Activated CD8-positive, alpha-beta T cell treated with anti-CD3 and anti-CD28 coated beads for 36 hours (primary cell): ENCODE measurements at regions of chr2 and their contacts with region 1.

Region 1: DNA sequence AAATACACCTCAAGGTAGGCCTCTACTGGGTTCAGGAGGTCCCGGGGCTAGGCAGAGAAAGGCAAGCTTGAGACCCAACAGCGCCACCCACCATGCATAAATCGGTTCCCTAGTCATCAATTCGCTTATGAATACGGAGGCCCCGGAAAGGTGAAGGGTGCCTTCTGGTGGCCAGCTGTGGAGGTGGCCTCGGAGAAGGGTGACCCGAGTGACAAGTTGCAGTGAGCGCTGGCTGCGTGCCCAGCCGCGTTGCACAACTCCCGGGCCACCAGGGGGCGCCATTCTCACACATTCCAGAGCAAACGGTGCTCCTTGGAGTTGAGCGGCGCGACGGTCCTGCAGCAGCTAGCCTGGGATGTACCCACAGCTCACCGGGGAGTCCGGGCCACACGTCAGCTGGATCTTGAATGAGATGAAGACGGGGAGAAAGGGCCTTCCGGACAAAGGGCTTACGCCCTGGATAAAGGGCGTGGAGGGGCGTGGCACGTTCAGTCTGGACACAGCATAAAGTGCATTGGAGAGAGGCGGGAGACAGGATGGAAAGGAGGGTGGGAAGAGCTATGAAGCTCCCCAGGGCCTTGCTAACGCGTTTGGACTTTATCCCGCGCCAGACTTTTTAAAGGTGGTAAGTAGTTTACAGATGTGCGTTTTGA is 20.4 kb downstream of the TMSB10 start:
- DNase-seq: peak; percentile 100
- ATAC-seq: peak; percentile 81
- H3K4me3 Mint-ChIP-seq: peak overlapping the region; percentile 91
- H3K27ac Mint-ChIP-seq: peak overlapping the region; percentile 84
- H3K4me1 Mint-ChIP-seq: peaks cover 37% of the 10 kb centered on the region
- H3K27me3 Mint-ChIP-seq: no peaks in the 10 kb centered on the region
- CTCF ChIP-seq: peak; percentile 99

Region 2: GRCh38 chr2:84741296-84741765 is 184.5 kb before region 1 on chr2:
- CTCF ChIA-PET with region 1: interaction called, 11 read pairs
- POLR2A ChIA-PET with region 1: interaction called, 3 read pairs
- intact Hi-C with region 1: no loop called
- DNase-seq: peak; percentile 75
- ATAC-seq: peak; percentile 100
- H3K4me3 Mint-ChIP-seq: no peak overlapping the region
- H3K27ac Mint-ChIP-seq: peak overlapping the region; percentile 32
- H3K4me1 Mint-ChIP-seq: peaks cover 15% of the 10 kb centered on the region
- H3K27me3 Mint-ChIP-seq: no peaks in the 10 kb centered on the region
- CTCF ChIP-seq: peak; percentile 52

Region 3: GRCh38 chr2:84865181-84865783 is 60.6 kb before region 1 on chr2:
- CTCF ChIA-PET with region 1: interaction called, 20 read pairs
- POLR2A ChIA-PET with region 1: interaction called, 5 read pairs
- intact Hi-C with region 1: no loop called
- DNase-seq: no peak
- ATAC-seq: peak; percentile 50
- H3K4me3 Mint-ChIP-seq: no peak overlapping the region
- H3K27ac Mint-ChIP-seq: peak overlapping the region; percentile 84
- H3K4me1 Mint-ChIP-seq: peaks cover 80% of the 10 kb centered on the region
- H3K27me3 Mint-ChIP-seq: no peaks in the 10 kb centered on the region
- CTCF ChIP-seq: peak; percentile 56

Region 4: GRCh38 chr2:84894758-84895520 is 30.9 kb before region 1 on chr2:
- CTCF ChIA-PET with region 1: interaction called, 60 read pairs
- POLR2A ChIA-PET with region 1: interaction called, 18 read pairs
- intact Hi-C with region 1: no loop called
- DNase-seq: peak; percentile 40
- ATAC-seq: peak; percentile 22
- H3K4me3 Mint-ChIP-seq: peak overlapping the region; percentile 27
- H3K27ac Mint-ChIP-seq: peak overlapping the region; percentile 77
- H3K4me1 Mint-ChIP-seq: peaks cover 57% of the 10 kb centered on the region
- H3K27me3 Mint-ChIP-seq: no peaks in the 10 kb centered on the region
- CTCF ChIP-seq: no peak

Region 5: DNA sequence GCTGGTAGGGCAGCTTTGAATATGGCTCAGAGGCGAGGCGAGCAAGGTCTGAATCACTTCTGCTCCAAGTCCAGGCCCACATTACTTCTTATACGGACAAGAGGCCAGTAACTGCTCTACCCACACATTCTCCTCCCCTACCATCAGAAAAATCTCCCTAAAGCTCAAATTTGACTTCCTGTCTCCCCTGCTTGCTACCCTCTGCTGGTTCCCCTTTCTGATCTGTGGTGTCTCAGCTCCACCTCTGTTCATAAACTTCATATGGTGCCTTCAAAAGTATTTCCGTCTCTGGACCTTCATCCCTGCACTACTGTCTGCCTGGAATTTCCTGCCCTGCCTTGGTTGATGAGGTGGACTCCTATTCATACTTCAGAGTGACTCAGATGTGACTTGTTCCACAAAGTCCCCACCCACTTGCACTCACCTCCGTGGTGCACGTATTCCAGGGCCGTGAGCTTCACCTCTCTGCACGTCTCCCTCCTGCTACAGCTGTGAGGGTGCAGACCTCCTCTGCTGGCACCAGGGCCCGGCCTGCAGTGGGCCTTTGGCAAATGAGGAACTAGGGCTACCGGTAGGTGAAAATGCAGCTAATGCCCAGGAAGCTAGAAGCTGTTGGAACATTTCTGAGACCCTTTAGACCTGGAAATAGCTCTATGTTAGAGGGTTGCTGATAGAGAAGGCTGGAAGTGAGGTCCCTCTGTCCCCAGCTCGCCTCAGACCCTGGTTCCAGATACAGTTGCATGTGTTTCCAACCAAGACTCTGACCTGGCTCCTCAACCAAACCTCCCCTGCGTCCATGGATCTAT is 20.6 kb after region 1 on chr2:
- CTCF ChIA-PET with region 1: interaction called, 88 read pairs
- POLR2A ChIA-PET with region 1: interaction called, 14 read pairs
- intact Hi-C with region 1: no loop called
- DNase-seq: peak; percentile 92
- ATAC-seq: peak; percentile 85
- H3K4me3 Mint-ChIP-seq: peak overlapping the region; percentile 68
- H3K27ac Mint-ChIP-seq: peak overlapping the region; percentile 95
- H3K4me1 Mint-ChIP-seq: peaks cover 47% of the 10 kb centered on the region
- H3K27me3 Mint-ChIP-seq: no peaks in the 10 kb centered on the region
- CTCF ChIP-seq: no peak

Region 6: GRCh38 chr2:85017411-85018048 is 91.7 kb after region 1 on chr2:
- CTCF ChIA-PET with region 1: interaction called, 71 read pairs
- POLR2A ChIA-PET with region 1: interaction called, 6 read pairs
- intact Hi-C with region 1: loop called (anchors 1 kb)
- DNase-seq: no peak
- ATAC-seq: no peak
- H3K4me3 Mint-ChIP-seq: no peak overlapping the region
- H3K27ac Mint-ChIP-seq: peak overlapping the region; percentile 45
- H3K4me1 Mint-ChIP-seq: peaks cover 61% of the 10 kb centered on the region
- H3K27me3 Mint-ChIP-seq: no peaks in the 10 kb centered on the region
- CTCF ChIP-seq: peak; percentile 50